ENCODE measurements at regions of chr2 and their contacts with region 1.

Region 1: DNA sequence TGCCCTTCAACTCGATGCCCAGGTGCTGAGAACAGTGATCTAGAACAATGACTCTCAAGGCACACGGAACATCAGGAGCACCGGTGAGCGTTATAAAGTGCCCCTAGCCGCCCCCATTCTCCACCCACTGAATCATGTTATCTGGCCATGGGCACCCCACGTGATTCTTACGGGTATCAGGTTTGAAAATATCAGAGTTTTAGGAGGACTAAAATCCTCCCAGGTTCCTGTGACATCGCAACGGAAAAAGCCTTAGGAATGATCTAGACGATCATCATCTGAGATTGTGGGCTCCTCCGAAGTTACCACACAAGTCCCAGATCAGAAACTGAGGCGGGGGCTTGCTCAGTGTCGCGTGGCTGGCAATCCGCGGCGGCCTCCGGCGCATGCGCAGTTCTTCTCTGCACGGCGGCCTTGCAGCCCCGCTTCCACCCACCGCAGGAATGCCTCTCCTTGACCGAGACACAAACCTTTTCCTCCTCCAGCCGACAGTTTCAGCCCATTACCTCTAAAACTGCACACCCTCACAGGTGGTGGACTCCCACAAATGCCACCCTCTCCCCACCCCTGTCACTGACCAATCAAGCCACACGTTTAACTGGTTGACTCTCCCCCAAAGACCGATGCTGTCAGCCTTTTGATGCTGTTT is 5.8 kb upstream of the MRPL33 start:
- DNase-seq: peak in 31 of 35 experiments; percentile 6 to 67 (median 39)
- ATAC-seq: peak in 3 of 4 experiments; percentile 53 to 67 (median 63)
- H3K4me3 ChIP-seq: peak overlapping the region in 1 of 2 donors; percentile 16
- H3K4me3 Mint-ChIP-seq: peak overlapping the region; percentile 60 to 65 (median 65)
- H3K27ac ChIP-seq: no peak overlapping the region
- H3K27ac Mint-ChIP-seq: no peak overlapping the region
- H3K4me1 ChIP-seq: peaks cover 0 to 10% of the 10 kb centered on the region in 2 experiments
- H3K4me1 Mint-ChIP-seq: peaks cover under 1 to 12% (median 12%) of the 10 kb centered on the region in 3 donors
- H3K27me3 ChIP-seq: peaks cover 0 to 7% of the 10 kb centered on the region in 2 experiments
- H3K27me3 Mint-ChIP-seq: peaks cover 3% of the 10 kb centered on the region in 2 donors

Region 2: DNA sequence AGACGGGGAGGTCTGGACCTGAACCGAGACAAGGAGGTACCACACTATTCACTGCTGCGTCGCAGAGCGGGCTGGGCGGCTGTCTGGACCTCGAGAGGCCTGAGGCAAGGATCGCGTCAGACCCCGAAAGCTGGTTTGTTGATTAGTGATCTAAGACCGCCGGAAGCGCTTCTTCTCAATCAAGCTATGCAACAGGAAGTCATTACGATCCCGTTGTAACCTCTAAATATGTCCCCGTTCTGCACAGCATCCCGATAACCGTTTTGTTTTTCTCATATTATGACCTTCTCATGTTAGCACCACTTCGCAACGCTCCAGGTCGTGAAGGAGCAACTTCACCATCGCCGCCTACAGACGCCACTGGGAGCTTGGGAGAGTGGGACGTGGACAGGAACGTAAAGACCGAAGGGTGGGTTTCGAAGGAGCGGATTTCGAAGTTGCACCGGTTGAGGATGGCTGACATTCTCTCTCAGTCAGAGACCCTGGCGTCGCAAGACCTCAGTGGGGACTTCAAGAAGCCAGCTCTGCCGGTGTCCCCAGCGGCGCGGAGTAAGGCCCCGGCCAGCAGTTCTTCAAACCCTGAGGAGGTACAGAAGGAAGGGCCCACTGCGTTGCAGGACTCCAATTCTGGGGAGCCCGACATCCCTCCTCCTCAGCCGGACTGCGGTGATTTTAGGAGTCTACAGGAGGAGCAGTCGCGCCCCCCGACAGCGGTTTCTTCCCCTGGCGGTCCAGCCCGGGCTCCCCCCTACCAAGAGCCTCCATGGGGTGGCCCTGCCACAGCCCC is 102.1 kb before region 1 on chr2 and contains the starts of genes SLC4A1AP and SUPT7L:
- CTCF ChIA-PET with region 1: no interaction called
- POLR2A ChIA-PET with region 1: no interaction called
- DNase-seq: peak; percentile 40 to 88 (median 69)
- ATAC-seq: peak; percentile 79 to 85 (median 82)
- H3K4me3 ChIP-seq: peak within 1 kb of the TSS; percentile 87 to 99
- H3K4me3 Mint-ChIP-seq: peak within 1 kb of the TSS; percentile 93 to 100 (median 98)
- H3K27ac ChIP-seq: peak within 1 kb of the TSS; percentile 87
- H3K27ac Mint-ChIP-seq: peak within 1 kb of the TSS; percentile 100
- H3K4me1 ChIP-seq: peaks cover 13 to 22% of the 10 kb centered on the region in 2 experiments
- H3K4me1 Mint-ChIP-seq: peaks cover 51 to 60% (median 56%) of the 10 kb centered on the region in 3 donors
- H3K27me3 ChIP-seq: no peaks in the 10 kb centered on the region
- H3K27me3 Mint-ChIP-seq: peaks cover 0 to 2% of the 10 kb centered on the region in 2 donors
- total RNA-seq, gene SLC4A1AP: 21.1 to 24.2 (median 21.8) TPM
- total RNA-seq, gene SUPT7L: 39.2 to 53.2 (median 39.3) TPM

Region 3: GRCh38 chr2:27689424-27689823 is 76.3 kb before region 1 on chr2:
- CTCF ChIA-PET with region 1: no interaction called
- POLR2A ChIA-PET with region 1: interaction called in 1 of 2 experiments, 10 read pairs
- DNase-seq: no peak
- ATAC-seq: no peak
- H3K4me3 ChIP-seq: no peak overlapping the region
- H3K4me3 Mint-ChIP-seq: no peak overlapping the region
- H3K27ac ChIP-seq: no peak overlapping the region
- H3K27ac Mint-ChIP-seq: no peak overlapping the region
- H3K4me1 ChIP-seq: peaks cover 8 to 10% of the 10 kb centered on the region in 2 experiments
- H3K4me1 Mint-ChIP-seq: peaks cover 7 to 13% (median 7%) of the 10 kb centered on the region in 3 donors
- H3K27me3 ChIP-seq: no peaks in the 10 kb centered on the region
- H3K27me3 Mint-ChIP-seq: no peaks in the 10 kb centered on the region

Measured in T-cell (primary cell).